Left lung (tissue), 14 donors: ENCODE measurements at regions of chrX and their contacts with region 1.

Region 1: GRCh38 chrX:109886122-109886761 is 116.7 kb upstream of the TMEM164 start:
- DNase-seq: peak in 1 of 4 donors; percentile 13
- ATAC-seq: peak; percentile 58
- H3K4me3 ChIP-seq: no peak overlapping the region
- H3K27ac ChIP-seq: peak overlapping the region in 1 of 2 donors; percentile 37
- H3K4me1 ChIP-seq: peaks cover 0 to 19% of the 10 kb centered on the region in 2 donors
- H3K27me3 ChIP-seq: peaks cover 0 to 9% of the 10 kb centered on the region in 2 donors
- CTCF ChIP-seq: peak; percentile 65 to 73

Region 2: DNA sequence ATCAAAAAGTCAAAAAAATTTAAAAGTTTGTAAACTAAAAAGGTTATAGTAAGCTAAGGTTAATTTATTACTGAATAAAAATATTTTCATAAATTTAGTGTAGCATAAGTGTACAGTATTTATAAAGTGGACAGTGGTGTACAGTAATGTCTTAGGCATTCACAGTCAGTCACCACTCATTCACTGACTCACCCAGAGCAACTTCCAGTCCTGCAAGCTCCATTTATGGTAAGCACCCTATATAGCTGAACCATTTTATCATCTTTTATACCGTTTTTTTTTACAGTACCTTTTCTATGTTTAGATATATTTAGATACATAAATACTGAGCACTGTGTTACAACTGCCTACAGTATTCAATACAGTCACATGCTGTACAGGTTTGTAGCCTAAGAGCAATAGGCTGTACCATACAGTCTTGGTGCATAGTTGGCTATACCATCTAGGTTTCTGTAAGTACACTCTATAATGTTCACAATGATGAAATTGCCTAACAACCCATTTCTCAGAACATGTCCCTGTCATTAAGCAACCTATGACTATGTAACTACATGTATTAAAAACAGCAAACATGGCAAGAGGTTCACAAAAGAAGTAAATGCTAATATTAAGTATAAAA is 171.8 kb before region 1 on chrX:
- intact Hi-C with region 1: loop called in 1 of 2 experiments (anchors 10 kb)
- DNase-seq: no peak
- ATAC-seq: peak; percentile 45
- H3K4me3 ChIP-seq: no peak overlapping the region
- H3K27ac ChIP-seq: no peak overlapping the region
- H3K4me1 ChIP-seq: peaks cover 0 to 60% of the 10 kb centered on the region in 2 donors
- H3K27me3 ChIP-seq: no peaks in the 10 kb centered on the region
- CTCF ChIP-seq: no peak